Activated CD4-positive, alpha-beta memory T cell treated with anti-CD3 and anti-CD28 coated beads for 36 hours (primary cell): ENCODE measurements at regions of chr5 and their contacts with region 1.

Region 1: GRCh38 chr5:34915139-34915855 is at the starts of genes BRIX1 and RAD1:
- DNase-seq: peak; percentile 97
- H3K4me3 Mint-ChIP-seq: no peak within 1 kb of the TSS
- H3K27ac Mint-ChIP-seq: no peak within 1 kb of the TSS
- H3K4me1 Mint-ChIP-seq: peaks cover 23% of the 10 kb centered on the region
- H3K27me3 Mint-ChIP-seq: no peaks in the 10 kb centered on the region
- total RNA-seq, gene BRIX1: 67.4 to 71.4 TPM
- total RNA-seq, gene RAD1: 36.2 to 38.3 TPM

Region 2: DNA sequence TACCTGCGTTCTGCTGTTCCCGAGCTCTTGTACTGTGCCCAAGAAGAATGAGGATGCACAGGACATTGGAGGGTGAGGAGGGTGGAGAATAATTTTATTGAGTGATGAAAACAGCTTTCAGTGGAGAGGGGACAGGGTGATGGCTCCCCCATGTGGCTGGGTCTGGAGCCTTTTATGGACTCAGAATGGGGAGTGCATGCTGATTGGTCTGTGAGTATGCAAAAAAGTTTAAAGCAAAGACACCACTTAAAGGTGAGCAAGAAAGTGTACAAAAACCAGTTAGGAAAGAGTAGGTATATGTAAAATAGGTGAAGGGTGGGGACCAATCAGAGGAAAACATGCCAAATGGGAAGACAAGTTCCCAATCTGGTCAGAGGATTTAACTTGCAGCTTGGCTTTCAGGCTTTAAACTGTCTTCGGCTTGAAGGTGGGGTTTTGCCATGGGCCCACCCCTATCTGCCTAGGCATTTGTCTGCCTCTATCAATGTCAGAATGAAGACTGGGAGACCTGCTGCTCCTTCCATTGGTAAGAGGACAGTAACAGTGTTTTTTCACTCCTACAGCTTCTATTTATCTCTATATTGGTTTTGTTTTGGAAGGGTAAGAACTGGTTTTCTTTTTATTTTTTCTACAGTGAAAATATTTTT is 377.1 kb before region 1 on chr5:
- CTCF ChIA-PET with region 1: no interaction called
- POLR2A ChIA-PET with region 1: no interaction called
- intact Hi-C with region 1: no loop called
- DNase-seq: peak; percentile 61
- H3K4me3 Mint-ChIP-seq: no peak overlapping the region
- H3K27ac Mint-ChIP-seq: no peak overlapping the region
- H3K4me1 Mint-ChIP-seq: peaks cover 31% of the 10 kb centered on the region
- H3K27me3 Mint-ChIP-seq: peaks cover 34% of the 10 kb centered on the region

Region 3: GRCh38 chr5:34656001-34656699 is 259.1 kb before region 1 on chr5 and contains the start of gene RAI14:
- CTCF ChIA-PET with region 1: no interaction called
- POLR2A ChIA-PET with region 1: no interaction called
- intact Hi-C with region 1: loop called (anchors 10 kb)
- DNase-seq: peak; percentile 36
- H3K4me3 Mint-ChIP-seq: peak within 1 kb of the TSS; percentile 77
- H3K27ac Mint-ChIP-seq: no peak within 1 kb of the TSS
- H3K4me1 Mint-ChIP-seq: peaks cover 16% of the 10 kb centered on the region
- H3K27me3 Mint-ChIP-seq: peaks cover 28% of the 10 kb centered on the region
- total RNA-seq, gene RAI14: 3.9 to 5.4 TPM

Region 4: DNA sequence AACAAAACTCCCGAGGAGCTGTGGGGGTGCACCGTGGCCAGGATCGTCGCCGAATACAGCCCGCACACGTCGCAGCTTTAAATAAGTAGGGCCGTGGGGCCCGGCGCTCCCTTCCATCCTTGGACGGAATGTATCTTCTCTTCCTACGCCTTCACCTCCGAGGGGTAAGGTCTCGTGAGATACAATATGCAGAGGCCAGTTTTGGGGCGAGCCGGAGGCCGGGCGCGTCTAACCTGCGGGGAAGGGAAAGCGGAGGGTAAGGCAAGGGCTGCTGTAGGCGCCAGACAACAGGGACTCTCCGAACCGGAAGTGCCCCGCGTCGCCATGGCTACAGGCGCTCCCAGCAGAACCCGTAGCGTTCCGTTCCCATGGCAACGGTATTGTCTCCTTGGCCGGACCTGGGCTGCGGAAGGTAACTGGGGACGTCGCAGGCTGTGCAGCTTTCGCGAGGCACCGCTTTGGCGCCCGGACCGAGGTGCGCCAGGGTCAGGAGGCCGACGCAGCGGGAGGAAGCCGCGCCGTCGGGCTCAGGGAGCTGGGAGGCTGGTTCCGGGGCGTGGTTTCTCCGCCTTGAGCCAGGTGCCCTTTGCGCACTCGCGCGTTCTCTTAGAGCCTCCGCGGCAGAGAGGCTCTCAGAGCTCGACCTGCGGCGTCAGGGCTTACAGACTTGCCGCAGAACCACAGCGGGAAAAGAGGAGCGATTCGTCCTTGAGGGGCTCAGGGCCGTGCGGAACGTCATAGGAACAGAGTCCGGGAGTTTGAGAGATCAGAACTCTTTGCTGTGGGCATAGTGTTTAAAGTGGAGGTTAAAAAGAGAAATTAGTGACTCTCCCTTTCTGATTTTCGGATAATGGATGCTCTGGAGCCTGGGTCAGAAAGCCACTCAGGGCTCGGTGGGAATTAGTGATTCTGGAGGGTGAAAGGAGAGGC is 76.2 kb before region 1 on chr5 and contains the start of gene TTC23L:
- CTCF ChIA-PET with region 1: interaction called, 3 read pairs
- POLR2A ChIA-PET with region 1: interaction called, 10 read pairs
- intact Hi-C with region 1: loop called (anchors 1 kb)
- DNase-seq: peak; percentile 93
- H3K4me3 Mint-ChIP-seq: peak within 1 kb of the TSS; percentile 90
- H3K27ac Mint-ChIP-seq: peak within 1 kb of the TSS; percentile 68
- H3K4me1 Mint-ChIP-seq: peaks cover 9% of the 10 kb centered on the region
- H3K27me3 Mint-ChIP-seq: no peaks in the 10 kb centered on the region
- total RNA-seq, gene TTC23L: 0.07 TPM in 1 of 2 experiments, not detected in the other

Region 5: GRCh38 chr5:34898258-34898895 is 16.9 kb before region 1 on chr5:
- CTCF ChIA-PET with region 1: interaction called, 7 read pairs
- POLR2A ChIA-PET with region 1: interaction called, 10 read pairs
- intact Hi-C with region 1: no loop called
- DNase-seq: peak; percentile 67
- H3K4me3 Mint-ChIP-seq: no peak overlapping the region
- H3K27ac Mint-ChIP-seq: no peak overlapping the region
- H3K4me1 Mint-ChIP-seq: no peaks in the 10 kb centered on the region
- H3K27me3 Mint-ChIP-seq: no peaks in the 10 kb centered on the region

Region 6: DNA sequence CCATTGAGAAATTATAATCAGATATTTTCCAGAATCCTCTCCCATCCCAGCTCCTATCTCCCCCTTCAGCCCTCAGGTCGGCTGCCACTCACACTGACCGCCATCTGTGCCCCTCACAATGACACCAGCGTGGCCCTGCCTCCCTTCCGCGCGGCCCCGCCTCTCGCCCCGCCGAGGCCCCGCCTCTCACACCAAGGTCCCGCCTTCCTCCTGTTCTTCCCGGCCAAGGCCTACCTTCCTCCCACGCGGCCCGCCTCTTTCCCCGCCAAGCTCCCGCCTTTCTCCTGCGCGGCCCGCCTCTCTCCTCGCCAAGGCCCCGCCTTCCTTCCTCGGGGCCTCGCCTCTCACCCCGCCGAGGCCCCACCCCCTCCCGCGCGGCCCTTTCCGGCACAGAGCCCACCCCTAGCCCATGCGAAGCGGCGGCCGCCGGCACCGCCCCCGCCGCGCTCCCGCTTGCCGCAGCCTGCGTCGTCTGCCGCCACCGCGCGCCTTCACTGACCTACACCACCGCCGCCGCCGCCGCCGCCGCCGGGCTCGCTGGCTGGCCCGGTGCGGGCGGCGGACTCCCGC is 13.9 kb after region 1 on chr5 and contains the start of gene DNAJC21:
- CTCF ChIA-PET with region 1: interaction called, 37 read pairs
- POLR2A ChIA-PET with region 1: interaction called, 77 read pairs
- intact Hi-C with region 1: loop called (anchors 1 kb)
- DNase-seq: peak; percentile 99
- H3K4me3 Mint-ChIP-seq: peak within 1 kb of the TSS; percentile 97
- H3K27ac Mint-ChIP-seq: peak within 1 kb of the TSS; percentile 93
- H3K4me1 Mint-ChIP-seq: peaks cover 35% of the 10 kb centered on the region
- H3K27me3 Mint-ChIP-seq: no peaks in the 10 kb centered on the region
- total RNA-seq, gene DNAJC21: 60.3 to 62.3 TPM

Region 7: DNA sequence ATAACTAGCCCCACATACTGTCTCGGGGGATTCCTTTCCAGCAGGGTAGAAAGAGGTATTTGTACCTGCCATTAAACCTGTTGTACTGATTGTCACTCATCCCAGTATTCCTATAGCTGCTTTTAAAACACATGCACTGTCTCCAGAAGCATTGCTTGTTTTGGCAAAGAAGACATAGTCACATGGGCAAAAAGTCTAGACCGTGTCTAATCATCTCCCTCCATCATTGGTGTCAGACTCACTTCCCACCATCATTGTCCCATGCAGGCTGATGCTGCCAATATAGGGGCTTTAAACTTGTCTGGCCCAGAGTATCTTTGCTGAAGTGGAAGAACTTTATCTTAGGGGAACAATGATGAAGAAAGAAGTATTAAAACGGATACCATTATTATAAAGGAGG is 26.6 kb after region 1 on chr5:
- CTCF ChIA-PET with region 1: no interaction called
- POLR2A ChIA-PET with region 1: no interaction called
- intact Hi-C with region 1: no loop called
- DNase-seq: no peak
- H3K4me3 Mint-ChIP-seq: no peak overlapping the region
- H3K27ac Mint-ChIP-seq: no peak overlapping the region
- H3K4me1 Mint-ChIP-seq: no peaks in the 10 kb centered on the region
- H3K27me3 Mint-ChIP-seq: no peaks in the 10 kb centered on the region

Region 8: GRCh38 chr5:34977934-34978613 is 62.8 kb after region 1 on chr5:
- CTCF ChIA-PET with region 1: no interaction called
- POLR2A ChIA-PET with region 1: no interaction called
- intact Hi-C with region 1: no loop called
- DNase-seq: no peak
- H3K4me3 Mint-ChIP-seq: no peak overlapping the region
- H3K27ac Mint-ChIP-seq: no peak overlapping the region
- H3K4me1 Mint-ChIP-seq: no peaks in the 10 kb centered on the region
- H3K27me3 Mint-ChIP-seq: peaks cover 2% of the 10 kb centered on the region

Region 9: GRCh38 chr5:35003018-35003957 is 88.0 kb after region 1 on chr5:
- CTCF ChIA-PET with region 1: interaction called, 8 read pairs
- POLR2A ChIA-PET with region 1: no interaction called
- intact Hi-C with region 1: loop called (anchors 2 kb)
- DNase-seq: peak; percentile 69
- H3K4me3 Mint-ChIP-seq: no peak overlapping the region
- H3K27ac Mint-ChIP-seq: no peak overlapping the region
- H3K4me1 Mint-ChIP-seq: no peaks in the 10 kb centered on the region
- H3K27me3 Mint-ChIP-seq: peaks cover 29% of the 10 kb centered on the region

Region 10: DNA sequence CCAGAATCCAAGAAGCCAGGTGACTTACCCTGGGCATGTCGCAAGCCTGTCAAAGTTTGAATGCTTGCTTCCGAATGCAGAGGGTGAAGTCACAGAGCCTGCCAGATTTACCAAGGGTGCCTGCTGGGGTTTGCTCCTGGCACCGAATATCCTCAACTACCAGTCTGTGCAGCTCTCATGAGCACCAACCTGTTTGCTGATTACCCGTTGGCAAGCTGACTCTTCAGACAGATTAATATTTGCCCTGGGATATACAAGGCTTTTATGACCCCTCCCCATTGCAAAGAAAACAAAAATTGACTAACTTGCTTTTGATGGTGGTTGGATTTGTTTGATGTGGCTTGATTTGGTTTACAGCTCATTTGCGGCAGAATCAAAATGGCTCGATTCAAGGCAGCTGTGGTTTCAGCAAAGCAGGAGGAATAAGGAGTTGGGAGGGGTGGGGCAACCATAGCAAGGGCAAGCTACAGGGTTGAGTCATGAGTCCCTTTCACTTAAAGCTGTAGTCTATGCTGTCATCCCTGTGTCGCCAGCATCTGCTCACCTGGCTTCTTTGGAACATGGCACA is 214.7 kb after region 1 on chr5:
- CTCF ChIA-PET with region 1: no interaction called
- POLR2A ChIA-PET with region 1: no interaction called
- intact Hi-C with region 1: loop called (anchors 5 kb)
- DNase-seq: peak; percentile 77
- H3K4me3 Mint-ChIP-seq: no peak overlapping the region
- H3K27ac Mint-ChIP-seq: no peak overlapping the region
- H3K4me1 Mint-ChIP-seq: peaks cover 21% of the 10 kb centered on the region
- H3K27me3 Mint-ChIP-seq: peaks cover 52% of the 10 kb centered on the region